ENCODE measurements at regions of chr3 and their contacts with region 1.

Region 1: DNA sequence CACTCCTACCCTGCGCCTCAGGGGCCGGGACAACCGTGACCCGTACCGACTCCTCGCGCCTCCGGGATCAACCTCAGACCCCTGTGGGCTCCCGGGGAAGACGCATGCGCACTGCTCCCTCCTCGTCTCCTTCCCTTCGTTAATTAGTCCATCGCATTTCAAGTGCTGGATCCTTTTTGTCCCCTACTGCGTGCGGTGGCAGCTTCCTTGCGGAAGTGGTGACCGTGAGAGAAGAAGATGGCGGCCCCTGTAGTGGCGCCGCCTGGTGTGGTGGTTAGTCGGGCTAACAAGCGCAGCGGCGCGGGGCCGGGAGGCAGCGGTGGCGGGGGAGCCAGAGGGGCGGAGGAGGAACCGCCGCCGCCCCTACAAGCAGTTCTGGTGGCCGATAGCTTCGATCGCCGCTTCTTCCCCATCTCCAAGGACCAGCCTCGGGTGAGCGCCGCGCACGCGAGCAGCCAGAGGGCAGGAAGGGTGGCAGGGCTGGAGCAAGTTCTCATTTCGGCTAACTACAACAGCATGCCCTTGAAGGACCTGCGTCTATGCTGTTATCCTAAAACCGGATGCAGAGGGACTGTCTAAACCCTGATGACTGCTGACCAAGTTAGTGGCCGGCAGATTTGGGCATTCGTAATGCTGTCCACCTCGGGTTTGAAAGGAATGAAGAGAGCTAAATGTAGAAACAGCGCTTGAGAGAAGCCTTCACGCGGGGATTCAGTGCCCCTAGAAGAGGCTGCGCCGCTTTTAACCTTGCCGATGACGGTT is at the start of gene EIF2B5:
- DNase-seq: peak; percentile 87
- H3K4me3 ChIP-seq: peak within 1 kb of the TSS; percentile 51 to 88 (median 86)
- H3K27ac ChIP-seq: peak within 1 kb of the TSS; percentile 51
- H3K4me1 ChIP-seq: peaks cover 12% of the 10 kb centered on the region
- H3K27me3 ChIP-seq: no peaks in the 10 kb centered on the region
- CTCF ChIP-seq: peak in 1 of 2 donors; percentile 47
- total RNA-seq, gene EIF2B5: 24.5 to 34.8 TPM

Region 2: GRCh38 chr3:183912895-183913579 is 222.3 kb before region 1 on chr3:
- CTCF ChIA-PET with region 1: no interaction called
- dilution Hi-C with region 1: no loop called
- in situ Hi-C with region 1: loop called in 1 of 2 experiments (anchors 10 kb)
- intact Hi-C with region 1: no loop called
- DNase-seq: no peak
- H3K4me3 ChIP-seq: no peak overlapping the region
- H3K27ac ChIP-seq: no peak overlapping the region
- H3K4me1 ChIP-seq: peaks cover 5% of the 10 kb centered on the region
- H3K27me3 ChIP-seq: no peaks in the 10 kb centered on the region
- CTCF ChIP-seq: no peak

Region 3: GRCh38 chr3:184017672-184018423 is 117.5 kb before region 1 on chr3 and contains the start of gene ABCC5:
- CTCF ChIA-PET with region 1: no interaction called
- dilution Hi-C with region 1: no loop called
- in situ Hi-C with region 1: no loop called
- intact Hi-C with region 1: loop called (anchors 2 kb)
- DNase-seq: peak; percentile 87
- H3K4me3 ChIP-seq: peak within 1 kb of the TSS; percentile 97 to 100 (median 100)
- H3K27ac ChIP-seq: peak within 1 kb of the TSS; percentile 35
- H3K4me1 ChIP-seq: peaks cover 17% of the 10 kb centered on the region
- H3K27me3 ChIP-seq: no peaks in the 10 kb centered on the region
- CTCF ChIP-seq: no peak
- total RNA-seq, gene ABCC5: 17.3 to 24.1 TPM

Region 4: GRCh38 chr3:184040010-184040409 is 95.3 kb before region 1 on chr3:
- CTCF ChIA-PET with region 1: interaction called, 4 read pairs
- dilution Hi-C with region 1: no loop called
- in situ Hi-C with region 1: no loop called
- intact Hi-C with region 1: loop called (anchors 2 kb)
- DNase-seq: peak; percentile 35
- H3K4me3 ChIP-seq: no peak overlapping the region
- H3K27ac ChIP-seq: no peak overlapping the region
- H3K4me1 ChIP-seq: no peaks in the 10 kb centered on the region
- H3K27me3 ChIP-seq: no peaks in the 10 kb centered on the region
- CTCF ChIP-seq: peak; percentile 49 to 56

Region 5: GRCh38 chr3:184174646-184175492 is 39.5 kb after region 1 on chr3 and contains the start of gene AP2M1:
- CTCF ChIA-PET with region 1: no interaction called
- dilution Hi-C with region 1: no loop called
- in situ Hi-C with region 1: no loop called
- intact Hi-C with region 1: loop called (anchors 2 kb)
- DNase-seq: peak; percentile 98
- H3K4me3 ChIP-seq: peak within 1 kb of the TSS; percentile 78 to 99 (median 82)
- H3K27ac ChIP-seq: peak within 1 kb of the TSS; percentile 53
- H3K4me1 ChIP-seq: peaks cover 29% of the 10 kb centered on the region
- H3K27me3 ChIP-seq: no peaks in the 10 kb centered on the region
- CTCF ChIP-seq: peak in 1 of 2 donors; percentile 10
- total RNA-seq, gene AP2M1: 291 to 348 TPM

Region 6: DNA sequence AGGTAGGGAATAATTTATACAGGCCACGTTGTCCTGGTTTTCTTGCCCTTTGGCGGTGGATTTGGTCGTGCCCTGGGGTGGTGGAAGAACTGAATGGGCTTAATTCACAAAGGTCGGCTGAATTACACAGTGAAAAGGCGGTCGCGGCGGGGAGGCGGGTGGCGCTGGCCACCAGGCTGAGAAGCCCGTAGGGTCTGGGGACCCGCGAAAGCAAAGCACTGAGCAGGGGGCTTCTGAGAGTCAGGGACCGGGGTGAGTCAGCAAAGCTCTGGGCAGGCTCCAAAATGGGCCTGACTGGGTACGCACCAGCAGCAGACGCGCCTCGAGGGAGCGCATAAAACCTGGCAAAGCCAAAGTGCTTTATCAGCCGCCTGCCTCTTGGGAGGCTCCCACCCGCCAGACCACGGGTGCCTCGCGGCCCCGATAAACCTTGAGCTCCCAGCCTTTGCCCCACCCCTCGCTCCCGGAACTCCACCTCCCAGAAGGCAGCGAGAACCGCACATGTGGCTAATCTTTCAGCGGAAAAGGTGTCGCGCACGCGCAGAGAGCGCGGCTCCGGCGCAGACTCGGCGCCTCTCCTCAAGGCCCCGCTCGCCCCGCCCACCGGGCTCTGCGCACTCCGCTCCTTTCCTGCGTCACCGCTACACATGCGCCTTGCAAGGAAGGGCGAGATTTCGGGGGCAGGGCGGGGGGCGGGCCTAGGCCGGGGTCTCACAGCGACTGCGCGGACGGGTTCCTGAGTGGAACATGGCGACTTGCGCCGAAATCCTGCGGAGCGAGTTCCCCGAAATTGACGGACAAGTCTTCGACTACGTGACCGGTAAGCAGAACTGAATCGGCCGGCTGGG is 50.4 kb after region 1 on chr3 and contains the start of gene ABCF3:
- CTCF ChIA-PET with region 1: no interaction called
- dilution Hi-C with region 1: no loop called
- in situ Hi-C with region 1: no loop called
- intact Hi-C with region 1: loop called (anchors 2 kb)
- DNase-seq: peak; percentile 98
- H3K4me3 ChIP-seq: peak within 1 kb of the TSS; percentile 44 to 95 (median 71)
- H3K27ac ChIP-seq: peak within 1 kb of the TSS; percentile 54
- H3K4me1 ChIP-seq: peaks cover 19% of the 10 kb centered on the region
- H3K27me3 ChIP-seq: no peaks in the 10 kb centered on the region
- CTCF ChIP-seq: no peak
- total RNA-seq, gene ABCF3: 50.8 to 58.2 TPM